Activated B cell treated with CpG ODN at 0.5 μM for 24 hours (primary cell): ENCODE measurements at regions of chr20 and their contacts with region 1.

Region 1: DNA sequence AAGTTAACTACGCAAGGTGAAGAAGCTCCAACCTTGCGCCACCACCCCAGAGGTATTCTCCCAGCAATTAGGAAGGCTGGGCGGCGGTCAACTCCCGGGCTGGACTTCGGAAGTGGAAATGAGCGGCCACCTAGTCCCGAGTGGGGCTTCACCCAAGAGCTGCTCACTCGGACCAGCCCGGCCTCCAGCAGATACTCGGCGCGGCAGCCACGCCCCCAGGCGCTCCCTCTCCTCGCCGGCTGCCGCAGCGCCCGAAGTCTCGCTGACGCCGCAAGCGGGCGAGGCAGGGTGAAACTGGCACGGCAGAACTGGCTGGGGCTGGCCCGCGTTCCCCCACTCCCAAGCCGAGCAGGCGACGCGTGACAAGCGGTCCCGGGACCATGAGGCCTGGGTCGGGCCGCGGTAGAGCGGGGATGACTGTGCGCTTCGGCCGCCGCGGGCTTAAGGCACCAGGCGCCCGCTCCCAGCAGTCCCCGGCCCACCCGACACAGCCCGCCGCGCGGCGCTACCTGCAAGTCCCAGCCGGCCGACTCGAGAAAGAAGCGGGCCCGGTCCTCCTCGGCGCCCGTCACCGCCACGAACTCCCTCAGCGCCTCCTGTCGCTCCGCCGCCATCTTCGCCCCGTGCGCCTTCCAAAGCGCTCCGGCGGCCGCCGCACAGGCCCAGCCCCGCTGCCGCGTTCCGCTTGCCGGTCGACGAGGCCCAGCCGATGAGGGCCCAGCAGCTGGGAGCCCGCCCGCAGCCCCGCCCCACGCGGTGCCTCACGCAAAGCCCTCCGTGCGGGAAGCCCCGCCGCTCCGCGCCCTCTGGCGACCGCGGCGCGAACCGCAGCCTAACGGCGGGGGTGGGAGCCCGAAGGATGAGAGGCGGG is at the start of gene NSFL1C:
- DNase-seq: peak; percentile 100
- ATAC-seq: peak; percentile 92
- H3K4me3 Mint-ChIP-seq: peak within 1 kb of the TSS; percentile 86
- H3K27ac Mint-ChIP-seq: peak within 1 kb of the TSS; percentile 89
- H3K4me1 Mint-ChIP-seq: peaks cover 81% of the 10 kb centered on the region
- H3K27me3 Mint-ChIP-seq: no peaks in the 10 kb centered on the region
- CTCF ChIP-seq: peak; percentile 93
- total RNA-seq, gene NSFL1C: 81.7 and 89.4 TPM in 2 replicates

Region 2: DNA sequence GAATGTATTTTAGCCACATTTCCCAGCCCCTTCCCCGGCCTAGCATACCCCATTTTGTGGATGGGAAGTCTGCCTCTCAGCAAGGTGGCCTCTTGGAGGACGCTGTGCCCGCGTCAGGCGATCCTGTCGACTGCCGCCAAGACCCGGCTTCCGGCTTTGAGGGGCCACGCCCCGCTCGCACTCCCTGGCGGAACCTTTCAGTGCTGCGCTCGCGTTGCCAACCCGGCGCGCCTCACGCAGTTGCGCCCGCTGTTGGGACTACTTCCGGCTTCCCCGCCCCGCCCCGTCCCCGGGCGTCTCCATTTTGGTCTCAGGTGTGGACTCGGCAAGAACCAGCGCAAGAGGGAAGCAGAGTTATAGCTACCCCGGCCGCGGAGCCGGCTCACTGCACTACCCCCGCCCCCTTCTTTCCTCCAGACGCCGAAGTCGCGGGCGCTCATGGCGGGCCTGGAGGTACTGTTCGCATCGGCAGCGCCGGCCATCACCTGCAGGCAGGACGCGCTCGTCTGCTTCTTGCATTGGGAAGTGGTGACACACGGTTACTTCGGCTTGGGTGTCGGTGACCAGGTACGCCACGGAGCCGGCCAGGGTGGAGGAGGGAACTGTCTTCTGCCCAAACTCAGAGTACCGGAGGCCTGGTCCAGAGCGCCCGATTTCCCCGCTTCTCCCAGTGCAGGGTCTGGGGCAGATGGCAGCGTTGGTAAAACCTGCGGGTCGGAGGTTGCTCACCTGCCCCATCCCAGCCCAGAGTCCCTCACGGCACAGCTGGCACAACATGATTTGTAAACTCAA is 347.9 kb before region 1 on chr20 and contains the start of gene PSMF1:
- CTCF ChIA-PET with region 1: no interaction called
- POLR2A ChIA-PET with region 1: no interaction called
- intact Hi-C with region 1: loop called (anchors 1 kb)
- DNase-seq: peak; percentile 98
- ATAC-seq: peak; percentile 94
- H3K4me3 Mint-ChIP-seq: peak within 1 kb of the TSS; percentile 93
- H3K27ac Mint-ChIP-seq: peak within 1 kb of the TSS; percentile 85
- H3K4me1 Mint-ChIP-seq: peaks cover 64% of the 10 kb centered on the region
- H3K27me3 Mint-ChIP-seq: no peaks in the 10 kb centered on the region
- CTCF ChIP-seq: no peak
- total RNA-seq, gene PSMF1: 130 and 137 TPM in 2 replicates

Region 3: DNA sequence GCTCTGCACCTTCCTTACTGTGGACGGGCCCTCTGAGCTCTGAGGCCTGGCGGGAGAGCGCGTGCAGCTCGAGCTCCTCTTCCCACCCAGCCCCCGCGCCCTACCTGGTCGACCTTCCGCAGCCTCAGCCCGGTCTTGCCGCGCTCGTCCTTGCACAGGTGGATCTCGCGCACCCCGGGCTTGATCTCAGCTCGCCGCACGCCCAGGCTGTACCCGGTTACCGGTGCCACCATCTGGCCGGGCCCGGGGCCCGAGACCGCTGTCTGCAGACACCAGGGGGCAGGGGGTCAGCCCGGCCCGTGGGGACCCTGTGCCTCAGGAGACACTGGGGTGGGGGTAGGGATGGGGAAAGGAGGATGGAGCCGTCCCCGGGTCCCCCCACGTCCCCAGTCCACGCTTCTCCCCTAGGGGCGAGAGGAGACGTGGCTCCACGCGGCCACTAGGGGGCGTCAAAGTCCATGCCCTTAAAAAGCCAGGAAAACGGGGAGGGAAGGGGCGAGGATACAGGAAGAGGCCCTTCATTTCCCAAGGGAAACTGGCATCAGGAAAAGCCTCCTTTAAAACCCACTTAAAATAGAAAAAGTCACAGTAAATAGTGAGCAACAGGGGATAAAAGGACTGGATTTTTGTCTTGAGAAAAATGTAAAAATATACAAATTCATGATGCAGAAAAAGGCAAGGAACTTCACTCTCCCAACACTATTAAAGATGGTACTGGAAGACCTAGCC is 153.0 kb before region 1 on chr20:
- CTCF ChIA-PET with region 1: interaction called, 7 read pairs
- POLR2A ChIA-PET with region 1: no interaction called
- intact Hi-C with region 1: loop called (anchors 1 kb)
- DNase-seq: peak; percentile 53
- ATAC-seq: peak; percentile 77
- H3K4me3 Mint-ChIP-seq: no peak overlapping the region
- H3K27ac Mint-ChIP-seq: no peak overlapping the region
- H3K4me1 Mint-ChIP-seq: peaks cover 2% of the 10 kb centered on the region
- H3K27me3 Mint-ChIP-seq: no peaks in the 10 kb centered on the region
- CTCF ChIP-seq: peak; percentile 90

Region 4: DNA sequence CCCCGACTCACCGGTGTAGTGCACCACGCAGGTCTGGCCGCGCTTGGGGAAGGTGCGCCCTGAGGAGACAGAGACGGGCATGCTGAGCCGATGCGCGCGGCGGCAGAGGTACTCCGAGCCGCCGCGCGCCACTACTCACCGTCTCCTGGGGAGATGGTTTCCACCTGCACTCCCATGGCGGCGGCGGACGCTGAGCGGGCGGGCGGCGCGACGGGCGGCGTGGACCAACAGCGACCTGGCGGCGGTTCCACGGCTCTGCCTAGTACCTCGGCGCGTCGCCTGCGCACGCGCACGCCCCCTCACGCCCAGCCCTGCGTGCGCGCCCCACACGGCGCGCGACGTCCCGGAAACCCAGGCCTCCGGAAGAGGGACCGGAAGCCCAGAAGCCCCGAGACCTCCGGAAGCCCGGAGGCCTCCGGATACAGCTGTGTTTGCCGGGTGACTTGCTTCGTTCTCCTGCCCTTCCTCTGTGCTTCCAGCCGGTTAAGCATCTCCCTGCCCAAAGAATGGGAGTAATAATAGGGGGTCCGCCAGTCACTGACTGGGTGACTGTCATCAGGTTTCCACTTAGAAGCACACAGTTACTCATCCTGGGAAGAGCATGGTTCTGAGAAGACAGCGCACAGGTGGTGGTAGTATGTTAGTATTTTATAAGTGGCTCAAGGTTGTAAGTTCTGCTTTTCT is 73.5 kb before region 1 on chr20 and contains the start of gene FKBP1A:
- CTCF ChIA-PET with region 1: no interaction called
- POLR2A ChIA-PET with region 1: interaction called, 25 read pairs
- intact Hi-C with region 1: loop called (anchors 1 kb)
- DNase-seq: peak; percentile 90
- ATAC-seq: peak; percentile 85
- H3K4me3 Mint-ChIP-seq: peak within 1 kb of the TSS; percentile 98
- H3K27ac Mint-ChIP-seq: peak within 1 kb of the TSS; percentile 99
- H3K4me1 Mint-ChIP-seq: peaks cover 83% of the 10 kb centered on the region
- H3K27me3 Mint-ChIP-seq: no peaks in the 10 kb centered on the region
- CTCF ChIP-seq: no peak
- total RNA-seq, gene FKBP1A: 128 and 134 TPM in 2 replicates

Region 5: DNA sequence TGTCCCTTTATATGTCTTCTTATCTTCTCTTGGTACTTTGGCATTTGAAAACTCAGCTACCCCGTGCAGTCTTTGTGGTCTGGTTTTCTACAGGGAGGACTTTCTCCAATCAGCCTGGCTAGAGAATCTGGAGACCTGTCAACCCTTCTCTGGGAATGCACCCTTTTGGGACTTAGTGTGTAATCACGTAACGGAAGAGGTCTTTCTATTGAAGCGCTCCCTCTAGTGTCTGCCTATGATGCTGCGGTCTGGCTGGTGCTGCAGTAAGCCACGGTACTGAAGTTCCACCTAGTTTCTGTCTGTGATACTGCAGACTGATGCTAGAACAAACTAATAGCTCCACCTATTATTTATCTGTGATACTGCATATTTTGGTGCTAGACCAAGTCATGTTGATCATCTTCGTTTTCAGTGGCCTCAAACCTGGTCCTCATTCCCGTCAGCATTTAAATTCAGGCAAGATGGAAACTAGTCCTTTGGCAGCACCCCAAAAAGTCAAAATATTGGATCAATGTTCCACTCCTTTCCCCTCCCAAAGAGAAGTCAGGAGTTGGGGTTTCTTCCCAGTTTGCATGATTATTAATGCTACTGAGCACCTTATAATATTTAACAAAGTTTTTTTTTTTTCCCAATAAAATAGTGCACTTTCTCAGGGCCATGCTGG is 37.2 kb after region 1 on chr20:
- CTCF ChIA-PET with region 1: interaction called, 65 read pairs
- POLR2A ChIA-PET with region 1: interaction called, 8 read pairs
- intact Hi-C with region 1: loop called (anchors 1 kb)
- DNase-seq: peak; percentile 45
- ATAC-seq: peak; percentile 100
- H3K4me3 Mint-ChIP-seq: no peak overlapping the region
- H3K27ac Mint-ChIP-seq: no peak overlapping the region
- H3K4me1 Mint-ChIP-seq: peaks cover 2% of the 10 kb centered on the region
- H3K27me3 Mint-ChIP-seq: peaks cover 23% of the 10 kb centered on the region
- CTCF ChIP-seq: peak; percentile 89

Region 6: DNA sequence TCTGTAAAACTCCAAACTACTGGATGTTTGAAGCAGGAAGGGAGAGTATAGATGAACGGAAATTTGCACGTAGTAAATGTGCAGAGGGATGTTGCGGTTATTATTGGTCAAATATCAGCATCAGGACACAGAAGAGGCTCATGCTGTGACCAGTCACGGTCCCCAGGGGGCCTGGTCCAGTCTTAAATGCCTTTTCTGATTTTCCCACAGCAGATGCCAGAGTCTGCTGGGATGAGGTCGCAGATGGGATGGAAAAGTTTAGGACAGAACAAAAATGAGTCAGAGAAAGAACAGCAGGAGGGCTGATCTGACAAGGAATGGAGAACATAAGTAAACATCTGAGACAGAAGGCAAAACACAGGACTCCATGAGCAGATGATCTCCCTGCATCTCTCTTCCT is 202.9 kb after region 1 on chr20:
- CTCF ChIA-PET with region 1: no interaction called
- POLR2A ChIA-PET with region 1: no interaction called
- intact Hi-C with region 1: no loop called
- DNase-seq: no peak
- ATAC-seq: no peak
- H3K4me3 Mint-ChIP-seq: no peak overlapping the region
- H3K27ac Mint-ChIP-seq: no peak overlapping the region
- H3K4me1 Mint-ChIP-seq: peaks cover 17% of the 10 kb centered on the region
- H3K27me3 Mint-ChIP-seq: peaks cover 2% of the 10 kb centered on the region
- CTCF ChIP-seq: no peak

Region 7: GRCh38 chr20:2470423-2471193 is 1004.2 kb after region 1 on chr20 and contains the start of gene SNRPB:
- CTCF ChIA-PET with region 1: no interaction called
- POLR2A ChIA-PET with region 1: no interaction called
- intact Hi-C with region 1: loop called (anchors 2 kb)
- DNase-seq: peak; percentile 95
- ATAC-seq: peak; percentile 94
- H3K4me3 Mint-ChIP-seq: peak within 1 kb of the TSS; percentile 99
- H3K27ac Mint-ChIP-seq: peak within 1 kb of the TSS; percentile 97
- H3K4me1 Mint-ChIP-seq: peaks cover 50% of the 10 kb centered on the region
- H3K27me3 Mint-ChIP-seq: no peaks in the 10 kb centered on the region
- CTCF ChIP-seq: no peak
- total RNA-seq, gene SNRPB: 215 and 234 TPM in 2 replicates